Left cardiac atrium (tissue), 4 donors: ENCODE measurements at regions of chr16 and their contacts with region 1.

Region 1: GRCh38 chr16:25224731-25225319 is 8.1 kb downstream of the AQP8 start:
- DNase-seq: no peak
- ATAC-seq: no peak

Region 2: DNA sequence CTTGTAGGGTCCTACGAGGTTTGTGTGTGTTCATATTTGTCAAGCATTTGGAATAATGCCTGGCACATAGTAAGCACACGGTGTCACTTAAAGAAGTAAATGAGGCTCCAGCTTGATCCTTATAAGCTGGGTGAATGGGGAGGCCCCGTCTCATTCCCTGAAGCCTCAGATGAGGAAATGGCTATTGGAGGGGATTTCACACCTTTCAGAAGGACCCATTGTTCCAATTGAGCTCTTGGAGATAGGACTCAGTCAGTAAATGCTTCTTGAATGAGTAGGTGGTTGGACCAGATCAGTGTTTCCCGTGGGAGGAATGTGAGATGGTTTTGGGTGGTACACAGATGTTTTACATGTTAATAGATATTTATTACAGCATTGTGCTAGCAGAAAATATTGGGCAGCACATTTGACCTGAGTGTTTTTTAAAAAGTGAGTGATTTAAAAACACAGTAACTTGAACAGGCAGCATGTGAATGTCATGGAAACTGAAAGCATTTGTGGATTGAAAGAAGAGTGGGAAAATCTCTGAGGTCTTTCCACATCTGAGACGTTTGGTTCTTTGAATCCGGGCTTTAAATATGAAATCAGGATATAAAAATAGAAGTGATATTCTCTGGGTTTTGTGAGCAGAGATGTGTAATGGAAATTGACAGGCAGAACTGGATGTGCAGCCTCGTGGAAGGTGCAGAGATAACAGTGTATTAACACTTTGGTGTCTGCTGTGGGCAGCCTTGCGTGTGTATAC is 173.2 kb before region 1 on chr16:
- intact Hi-C with region 1: loop called in 1 of 2 experiments (anchors 5 kb)
- DNase-seq: no peak
- ATAC-seq: peak; percentile 35

Region 3: GRCh38 chr16:25066747-25067631 is 157.8 kb before region 1 on chr16:
- intact Hi-C with region 1: loop called in 1 of 2 experiments (anchors 10 kb)
- DNase-seq: peak; percentile 88
- ATAC-seq: peak; percentile 97 to 98

Region 4: GRCh38 chr16:25126820-25127232 is 98.0 kb before region 1 on chr16:
- intact Hi-C with region 1: loop called in 1 of 2 experiments (anchors 10 kb)
- DNase-seq: no peak
- ATAC-seq: peak; percentile 53 to 82